WTC11 (cell line): ENCODE measurements at regions of chr9 and their contacts with region 1.

Region 1: DNA sequence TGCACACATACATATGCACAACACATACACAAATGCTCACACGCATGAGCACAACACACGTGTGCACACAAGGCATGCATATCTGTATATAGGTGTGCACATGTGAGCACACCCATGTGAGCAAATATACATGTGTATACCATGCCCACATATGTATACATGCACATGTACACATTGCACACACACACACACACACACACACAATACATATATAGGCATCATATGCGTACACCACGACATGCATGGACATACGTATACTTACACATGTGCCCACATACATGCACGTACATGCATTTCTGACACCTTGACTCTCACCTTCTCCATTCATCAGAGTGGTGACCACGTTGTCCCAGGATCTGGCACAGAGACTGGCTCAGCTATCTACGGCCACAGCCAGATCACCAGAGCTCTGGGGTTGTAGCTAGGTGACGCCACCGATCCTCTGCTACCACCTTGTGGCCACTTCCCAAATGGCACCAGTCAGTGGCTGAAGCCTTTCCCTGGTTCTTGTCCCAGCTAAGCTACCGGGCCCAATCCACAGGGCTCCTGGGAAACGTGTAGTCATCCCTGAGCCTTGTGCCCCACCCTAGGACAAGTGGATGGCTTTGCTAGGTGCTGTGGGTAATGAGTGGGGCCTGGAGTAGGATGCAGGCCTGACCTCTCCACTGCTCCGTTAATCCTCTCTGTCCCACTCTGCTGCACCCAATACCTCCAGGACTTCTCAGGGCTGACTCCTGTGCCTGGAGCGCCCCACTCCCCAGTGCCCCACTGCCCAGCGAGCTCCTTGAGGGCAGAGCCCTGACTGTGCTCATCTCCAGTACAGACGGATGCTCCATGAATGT is 194.4 kb downstream of the RGS3 start:
- DNase-seq: peak; percentile 92
- ATAC-seq: peak; percentile 94
- H3K4me3 Mint-ChIP-seq: no peak overlapping the region
- H3K27ac Mint-ChIP-seq: no peak overlapping the region
- H3K4me1 Mint-ChIP-seq: peaks cover 12% of the 10 kb centered on the region
- H3K27me3 Mint-ChIP-seq: peaks cover 13% of the 10 kb centered on the region
- CTCF ChIP-seq: peak; percentile 83

Region 2: DNA sequence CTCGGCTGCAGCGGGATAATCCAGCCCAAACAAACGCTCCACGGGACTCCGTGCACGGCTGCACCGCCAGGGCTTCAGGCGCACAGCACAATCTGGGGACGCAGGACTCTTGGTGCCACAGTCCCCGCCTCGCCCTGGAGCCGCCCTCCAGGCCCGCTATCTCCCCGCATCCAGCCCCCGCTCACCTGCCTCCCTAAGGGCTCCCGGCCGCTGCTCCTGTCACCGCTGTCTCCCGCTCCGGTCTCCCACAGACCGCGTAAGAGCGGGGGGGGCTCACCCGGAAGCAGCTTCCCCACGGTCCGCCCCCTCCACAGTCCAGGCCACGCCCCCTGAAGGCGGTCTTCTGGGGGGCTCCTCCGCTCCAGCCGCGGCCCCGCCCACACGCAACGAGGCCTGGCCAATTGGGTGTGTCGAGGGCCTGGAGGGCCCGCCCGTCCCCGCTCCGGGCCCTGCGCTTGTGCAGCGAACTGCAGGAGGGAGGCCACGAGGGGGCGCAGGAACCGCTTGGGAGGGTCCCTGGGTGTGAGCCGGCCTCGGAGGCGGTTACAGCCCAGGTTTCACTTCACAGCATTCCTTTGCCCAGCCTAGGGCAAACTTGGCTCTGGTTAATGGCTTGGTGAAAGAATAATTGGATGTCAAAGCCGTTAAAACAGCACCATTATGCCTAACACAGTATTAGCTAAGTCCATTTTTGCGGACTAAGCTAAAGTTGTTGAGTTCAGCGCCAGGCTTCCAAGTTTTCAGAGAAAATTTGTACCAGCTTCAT is 256.7 kb before region 1 on chr9 and contains the start of gene ALAD:
- CTCF ChIA-PET with region 1: interaction called, 12 read pairs
- POLR2A ChIA-PET with region 1: no interaction called
- DNase-seq: peak; percentile 100
- ATAC-seq: peak; percentile 97
- H3K4me3 Mint-ChIP-seq: peak within 1 kb of the TSS; percentile 85
- H3K27ac Mint-ChIP-seq: peak within 1 kb of the TSS; percentile 91
- H3K4me1 Mint-ChIP-seq: peaks cover 14% of the 10 kb centered on the region
- H3K27me3 Mint-ChIP-seq: no peaks in the 10 kb centered on the region
- CTCF ChIP-seq: peak; percentile 75
- total RNA-seq, gene ALAD: 14.7 to 15.9 TPM (median 15.5 TPM) in 3 replicates

Region 3: GRCh38 chr9:113454914-113455761 is 202.8 kb before region 1 on chr9:
- CTCF ChIA-PET with region 1: interaction called, 19 read pairs
- POLR2A ChIA-PET with region 1: no interaction called
- DNase-seq: no peak
- ATAC-seq: peak; percentile 69
- H3K4me3 Mint-ChIP-seq: no peak overlapping the region
- H3K27ac Mint-ChIP-seq: peak overlapping the region; percentile 82
- H3K4me1 Mint-ChIP-seq: peaks cover 24% of the 10 kb centered on the region
- H3K27me3 Mint-ChIP-seq: no peaks in the 10 kb centered on the region
- CTCF ChIP-seq: no peak

Region 4: DNA sequence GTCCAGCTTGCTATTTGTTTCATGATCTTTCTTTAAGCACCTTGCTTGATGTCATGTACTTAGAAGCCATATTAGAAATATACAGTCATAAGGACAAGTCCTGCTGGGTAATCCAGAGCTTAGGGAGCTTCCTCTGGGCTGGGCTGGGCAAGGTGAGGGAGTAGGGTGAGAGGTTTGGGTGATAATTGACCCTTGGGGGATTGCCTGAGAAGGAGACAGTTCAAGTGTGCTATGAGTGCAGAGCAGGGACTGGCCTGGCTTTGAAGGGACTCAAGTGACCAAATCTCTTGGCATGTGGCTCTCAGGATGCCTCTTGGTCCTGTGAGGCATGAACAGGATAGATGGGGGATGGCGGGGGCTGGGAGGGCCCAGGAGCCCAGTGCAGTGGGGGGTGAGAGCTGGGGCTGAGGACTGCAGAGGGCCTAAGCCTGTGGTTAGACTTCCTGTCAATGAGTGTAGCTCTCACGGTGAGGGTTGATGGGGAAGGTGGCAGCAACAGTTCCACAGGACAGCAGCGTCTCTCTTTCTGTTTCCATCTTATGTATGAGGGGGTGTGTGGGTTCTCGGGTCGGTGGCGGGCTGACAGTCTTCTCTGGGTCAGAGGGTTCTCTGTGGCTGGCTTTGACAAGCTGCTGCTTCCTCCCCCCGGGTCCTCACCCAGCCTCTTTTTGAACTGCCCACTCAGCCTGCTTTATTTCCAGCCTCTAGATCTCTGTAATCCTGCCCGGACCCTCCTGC is 140.9 kb before region 1 on chr9:
- CTCF ChIA-PET with region 1: interaction called, 11 read pairs
- POLR2A ChIA-PET with region 1: no interaction called
- DNase-seq: no peak
- ATAC-seq: no peak
- H3K4me3 Mint-ChIP-seq: no peak overlapping the region
- H3K27ac Mint-ChIP-seq: no peak overlapping the region
- H3K4me1 Mint-ChIP-seq: no peaks in the 10 kb centered on the region
- H3K27me3 Mint-ChIP-seq: no peaks in the 10 kb centered on the region
- CTCF ChIP-seq: no peak

Region 5: DNA sequence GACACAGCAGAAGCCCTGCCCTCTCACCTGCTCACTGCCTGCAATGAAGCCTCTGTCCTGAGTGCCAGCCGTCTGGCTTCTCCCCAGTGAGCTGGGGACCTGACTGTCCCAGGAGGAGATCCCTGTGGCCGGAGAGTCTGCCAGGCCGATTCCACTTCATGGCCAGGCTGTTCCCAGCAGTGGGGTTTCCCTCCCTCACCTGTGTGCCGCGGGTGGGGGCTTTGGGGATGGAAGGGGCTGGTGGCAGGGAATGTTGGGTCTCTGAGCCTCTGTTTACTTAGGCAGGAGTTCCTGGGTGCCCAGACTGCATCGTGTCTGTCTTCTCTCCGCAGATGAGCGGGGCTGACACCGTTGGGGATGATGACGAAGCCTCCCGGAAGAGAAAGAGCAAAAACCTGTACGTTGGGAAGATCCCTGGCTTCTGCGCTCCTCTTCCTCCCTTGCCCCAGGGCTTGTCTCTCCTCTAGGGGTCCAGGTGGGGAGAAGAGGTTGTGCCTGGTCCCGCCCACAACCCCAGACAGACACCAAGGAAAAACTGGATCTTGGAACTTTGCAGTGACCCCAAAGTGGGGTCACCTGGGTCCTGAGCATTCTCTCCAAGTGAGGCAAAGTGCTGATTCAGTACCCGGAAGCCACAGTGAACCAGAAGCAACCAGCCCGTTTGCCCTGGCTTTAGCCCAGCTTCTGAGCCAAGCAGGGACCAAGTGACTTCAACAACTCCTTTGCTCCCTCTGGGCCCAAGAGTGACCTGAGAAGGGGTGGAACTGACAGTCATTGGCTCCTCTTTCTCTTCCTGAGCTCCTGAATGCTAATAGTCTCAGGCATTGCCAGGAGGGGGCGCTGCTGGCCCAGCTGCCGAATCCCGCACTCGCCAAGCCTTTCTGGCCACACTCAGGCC is 66.7 kb before region 1 on chr9:
- CTCF ChIA-PET with region 1: interaction called, 962 read pairs
- POLR2A ChIA-PET with region 1: interaction called, 10 read pairs
- DNase-seq: peak; percentile 91
- ATAC-seq: peak; percentile 55
- H3K4me3 Mint-ChIP-seq: no peak overlapping the region
- H3K27ac Mint-ChIP-seq: no peak overlapping the region
- H3K4me1 Mint-ChIP-seq: peaks cover 36% of the 10 kb centered on the region
- H3K27me3 Mint-ChIP-seq: no peaks in the 10 kb centered on the region
- CTCF ChIP-seq: peak; percentile 88

Region 6: GRCh38 chr9:113622600-113623400 is 35.1 kb before region 1 on chr9:
- CTCF ChIA-PET with region 1: interaction called, 29 read pairs
- POLR2A ChIA-PET with region 1: interaction called, 4 read pairs
- DNase-seq: peak; percentile 70
- ATAC-seq: peak; percentile 89
- H3K4me3 Mint-ChIP-seq: peak overlapping the region; percentile 20
- H3K27ac Mint-ChIP-seq: peak overlapping the region; percentile 93
- H3K4me1 Mint-ChIP-seq: peaks cover 54% of the 10 kb centered on the region
- H3K27me3 Mint-ChIP-seq: peaks cover 26% of the 10 kb centered on the region
- CTCF ChIP-seq: no peak